ENCODE measurements at regions of chr15 and their contacts with region 1.

Region 1: DNA sequence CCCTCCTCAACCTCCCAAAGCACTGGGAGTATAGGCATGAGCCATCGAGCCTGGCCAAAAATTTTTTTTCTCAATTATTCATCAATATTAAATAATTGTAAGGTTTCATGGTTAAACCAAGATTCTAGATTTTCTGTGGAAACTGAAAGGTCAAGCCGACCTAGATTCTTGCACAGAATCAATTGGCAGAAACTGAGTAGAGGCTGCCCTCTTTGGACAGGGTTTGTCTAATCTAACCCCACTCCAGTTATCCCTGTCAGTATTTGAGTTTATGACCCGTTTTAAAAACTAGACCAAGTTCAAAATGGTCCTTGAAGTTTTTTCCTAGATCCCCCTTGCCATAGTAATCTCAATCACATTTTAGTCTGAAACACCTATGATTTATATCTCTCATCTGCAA is 8.6 kb upstream of the ADAM10 start:
- DNase-seq: peak; percentile 22
- H3K4me3 ChIP-seq: no peak overlapping the region
- H3K27ac ChIP-seq: no peak overlapping the region
- H3K4me1 ChIP-seq: no peaks in the 10 kb centered on the region
- CTCF ChIP-seq: peak; percentile 71

Region 2: DNA sequence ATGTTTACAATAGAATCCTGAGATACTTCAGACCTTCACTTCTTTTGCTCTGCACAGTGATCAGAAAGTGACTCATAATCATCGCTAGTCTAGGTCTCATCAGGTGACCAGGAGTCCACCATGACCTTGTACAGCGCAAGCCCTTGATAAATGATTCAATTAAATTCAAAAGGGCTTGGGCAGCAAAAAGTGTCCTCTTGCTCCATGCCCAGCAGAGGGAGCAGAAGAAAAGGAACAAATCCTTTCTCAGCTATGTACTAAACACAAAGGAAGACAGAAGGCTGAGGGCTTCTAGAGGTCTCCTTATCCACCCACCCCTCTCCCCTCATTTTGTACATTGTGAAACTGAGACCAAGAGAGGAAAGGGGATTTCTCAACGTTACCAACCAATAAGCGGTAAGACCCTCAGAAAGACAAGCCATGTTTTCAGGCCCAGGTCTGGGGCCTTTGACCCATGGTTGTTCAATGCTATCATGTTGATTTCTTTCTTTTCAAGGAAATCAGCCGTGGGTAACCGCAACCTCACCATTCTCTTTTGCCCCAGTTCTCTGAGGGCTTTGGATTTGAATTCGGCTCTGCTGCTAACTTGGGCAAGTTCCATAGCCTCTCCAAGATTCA is 545.1 kb before region 1 on chr15:
- CTCF ChIA-PET with region 1: no interaction called
- POLR2A ChIA-PET with region 1: no interaction called
- intact Hi-C with region 1: loop called (anchors 5 kb)
- DNase-seq: peak; percentile 5
- H3K4me3 ChIP-seq: no peak overlapping the region
- H3K27ac ChIP-seq: no peak overlapping the region
- H3K4me1 ChIP-seq: no peaks in the 10 kb centered on the region
- CTCF ChIP-seq: peak; percentile 46

Region 3: DNA sequence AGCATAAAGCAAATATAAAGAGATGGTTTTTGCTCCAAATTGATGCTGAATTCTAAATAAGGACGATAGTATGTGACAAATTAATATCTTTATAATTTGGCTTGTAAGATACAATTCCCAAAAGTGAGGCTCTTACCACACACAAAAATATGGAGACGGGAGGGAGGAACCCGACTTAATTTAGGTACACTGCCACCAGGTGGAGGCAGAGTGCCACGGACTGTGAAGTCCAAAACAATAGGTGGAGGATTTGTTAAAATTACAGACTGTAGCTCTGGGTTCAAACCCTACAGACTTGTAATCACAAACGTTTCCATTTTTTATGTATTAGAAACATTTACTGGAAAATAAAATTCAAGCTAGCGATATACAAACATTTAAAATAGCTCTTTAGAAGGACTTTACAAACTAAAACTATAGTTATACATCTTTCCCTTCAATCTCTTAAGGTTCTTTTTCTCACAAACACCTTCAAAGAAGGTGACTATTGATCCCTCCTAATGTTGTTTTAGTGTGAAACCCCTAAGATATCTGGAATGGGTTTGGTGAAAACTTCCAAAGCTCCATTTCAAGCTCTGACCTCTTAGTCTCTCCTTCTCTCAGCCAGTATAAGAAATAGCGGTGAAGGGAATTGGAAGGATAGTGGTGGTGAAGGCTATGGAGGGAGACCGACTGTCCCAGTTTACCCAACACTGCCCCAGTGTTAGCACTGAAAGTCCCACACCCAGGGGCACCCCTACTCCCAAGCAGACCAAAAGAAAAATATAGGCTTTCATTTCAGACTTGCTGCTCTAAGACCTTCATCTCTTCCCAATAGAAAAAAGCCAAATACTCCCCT is 530.2 kb before region 1 on chr15:
- CTCF ChIA-PET with region 1: no interaction called
- POLR2A ChIA-PET with region 1: no interaction called
- intact Hi-C with region 1: loop called (anchors 2 kb)
- DNase-seq: peak; percentile 75
- H3K4me3 ChIP-seq: no peak overlapping the region
- H3K27ac ChIP-seq: no peak overlapping the region
- H3K4me1 ChIP-seq: no peaks in the 10 kb centered on the region
- CTCF ChIP-seq: peak; percentile 97

Region 4: DNA sequence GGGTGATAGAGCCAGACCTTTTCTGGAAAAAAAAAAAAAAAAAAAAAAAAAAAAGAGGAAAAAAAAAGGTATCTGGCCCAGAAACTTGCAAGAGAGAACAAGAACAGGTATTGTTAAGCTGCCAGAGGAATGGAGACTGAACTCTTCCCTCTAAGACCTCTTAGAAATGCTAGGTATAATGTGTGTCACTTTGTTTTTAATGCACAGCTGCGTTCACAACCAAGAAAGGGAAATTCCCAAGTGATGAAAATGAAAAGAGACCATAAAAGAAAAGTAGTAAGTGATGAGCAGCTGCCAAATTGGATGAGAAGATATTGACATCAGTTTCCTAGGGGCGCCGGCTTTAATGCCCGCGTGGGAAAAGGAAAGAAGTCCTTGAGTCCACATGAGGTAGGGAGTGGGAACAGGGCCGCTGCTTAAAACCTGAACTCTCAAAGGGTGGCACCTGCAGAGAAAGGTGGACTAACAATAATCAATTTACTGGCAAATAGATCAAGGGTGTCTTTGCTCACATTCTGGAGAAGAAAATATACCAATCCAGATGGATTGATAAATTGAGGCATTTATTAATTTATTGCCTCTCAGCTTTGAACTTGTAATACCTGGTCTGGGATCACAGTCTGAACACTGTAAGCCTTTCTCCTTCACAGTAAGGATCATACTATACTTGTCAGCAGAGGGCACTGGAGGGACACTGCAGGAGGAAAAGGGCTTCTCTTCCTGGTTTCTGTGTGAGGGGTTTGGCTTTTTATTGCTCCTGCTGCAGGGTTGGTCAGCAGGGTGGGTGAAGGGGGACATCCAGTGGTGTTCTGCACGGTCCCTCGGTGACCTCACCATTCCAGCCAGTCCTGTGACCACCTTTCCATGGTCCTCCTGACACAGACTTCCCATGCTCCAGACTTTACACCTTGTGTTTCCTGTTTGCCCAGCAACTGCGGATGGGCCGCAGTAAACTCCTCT is 488.4 kb before region 1 on chr15:
- CTCF ChIA-PET with region 1: no interaction called
- POLR2A ChIA-PET with region 1: interaction called, 3 read pairs
- intact Hi-C with region 1: loop called (anchors 5 kb)
- DNase-seq: peak; percentile 60
- H3K4me3 ChIP-seq: no peak overlapping the region
- H3K27ac ChIP-seq: no peak overlapping the region
- H3K4me1 ChIP-seq: no peaks in the 10 kb centered on the region
- CTCF ChIP-seq: peak; percentile 80

Region 5: GRCh38 chr15:58698887-58699641 is 59.1 kb before region 1 on chr15:
- CTCF ChIA-PET with region 1: no interaction called
- POLR2A ChIA-PET with region 1: no interaction called
- intact Hi-C with region 1: no loop called
- DNase-seq: no peak
- H3K4me3 ChIP-seq: no peak overlapping the region
- H3K27ac ChIP-seq: no peak overlapping the region
- H3K4me1 ChIP-seq: no peaks in the 10 kb centered on the region
- CTCF ChIP-seq: no peak

Measured in OCI-LY7 (cell line).